ENCODE measurements at regions of chr4 and their contacts with region 1.

Region 1: GRCh38 chr4:7313347-7313811 is 121.0 kb downstream of the SORCS2 start:
- DNase-seq: peak in 1 of 2 donors; percentile 6
- ATAC-seq: no peak
- H3K4me3 ChIP-seq: no peak overlapping the region
- H3K27ac ChIP-seq: no peak overlapping the region
- H3K4me1 ChIP-seq: no peaks in the 10 kb centered on the region
- H3K27me3 ChIP-seq: no peaks in the 10 kb centered on the region
- CTCF ChIP-seq: no peak

Region 2: GRCh38 chr4:5459236-5459635 is 1854.1 kb before region 1 on chr4:
- intact Hi-C with region 1: loop called in 1 of 2 experiments (anchors 5 kb)
- DNase-seq: no peak
- ATAC-seq: no peak
- H3K4me3 ChIP-seq: no peak overlapping the region
- H3K27ac ChIP-seq: no peak overlapping the region
- H3K4me1 ChIP-seq: no peaks in the 10 kb centered on the region
- H3K27me3 ChIP-seq: peaks cover 0 to 1% (median 0%) of the 10 kb centered on the region in 3 donors
- CTCF ChIP-seq: no peak

Region 3: DNA sequence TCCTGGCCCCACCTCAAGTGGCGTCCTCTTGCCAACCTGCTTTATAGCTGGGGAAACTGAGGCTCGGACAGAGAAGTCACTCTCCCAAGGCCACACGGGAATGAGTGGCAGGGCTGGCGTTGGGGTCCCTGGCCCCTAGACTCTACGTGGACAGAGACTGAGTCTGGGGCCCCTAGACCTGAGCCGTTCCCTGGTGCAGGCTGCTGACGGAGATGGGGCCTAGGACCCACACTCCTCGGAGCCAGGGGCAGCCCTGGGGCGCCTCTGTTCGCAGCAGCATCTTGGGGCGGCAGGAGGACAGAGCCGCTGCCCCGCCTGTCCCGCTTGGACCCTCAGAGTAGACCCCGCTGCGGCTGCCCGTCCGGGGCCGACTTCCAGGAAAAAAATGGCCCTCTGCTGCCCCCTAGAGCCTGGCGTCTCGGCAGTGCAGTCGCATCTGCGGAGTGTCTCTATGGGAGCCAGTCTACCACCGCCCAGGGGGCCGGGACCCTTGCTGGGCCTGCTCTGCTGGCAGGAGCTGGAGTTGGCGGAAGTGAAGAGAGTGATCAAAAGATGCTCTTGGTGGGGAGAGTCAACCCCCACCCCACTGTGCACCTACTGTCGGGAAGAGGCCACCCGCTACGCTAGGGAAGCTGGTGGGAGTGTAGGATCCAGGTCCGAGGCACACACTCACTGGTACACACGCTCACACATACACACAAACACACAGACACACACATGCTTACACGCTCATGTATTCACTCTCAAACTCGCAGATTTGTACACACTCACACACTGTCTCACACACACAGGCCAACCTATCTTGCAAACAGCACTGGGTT is 406.2 kb after region 1 on chr4:
- intact Hi-C with region 1: loop called in 1 of 2 experiments (anchors 10 kb)
- DNase-seq: peak; percentile 48 to 76
- ATAC-seq: peak; percentile 58 to 77 (median 69)
- H3K4me3 ChIP-seq: no peak overlapping the region
- H3K27ac ChIP-seq: no peak overlapping the region
- H3K4me1 ChIP-seq: no peaks in the 10 kb centered on the region
- H3K27me3 ChIP-seq: peaks cover 0 to 5% (median 2%) of the 10 kb centered on the region in 3 donors
- CTCF ChIP-seq: peak; percentile 74

Measured in psoas muscle (tissue), 8 donors.